Left colon (tissue), 2 donors: ENCODE measurements at regions of chr14 and their contacts with region 1.

Region 1: GRCh38 chr14:65164068-65164824 is 61.9 kb upstream of the MAX start:
- DNase-seq: no peak
- ATAC-seq: peak; percentile 71

Region 2: GRCh38 chr14:64503478-64504309 is 660.6 kb before region 1 on chr14 and contains the start of gene ZBTB25:
- intact Hi-C with region 1: no loop called
- DNase-seq: peak; percentile 89
- ATAC-seq: peak; percentile 74
- total RNA-seq, gene ZBTB25: 5.9 to 6.5 TPM

Region 3: DNA sequence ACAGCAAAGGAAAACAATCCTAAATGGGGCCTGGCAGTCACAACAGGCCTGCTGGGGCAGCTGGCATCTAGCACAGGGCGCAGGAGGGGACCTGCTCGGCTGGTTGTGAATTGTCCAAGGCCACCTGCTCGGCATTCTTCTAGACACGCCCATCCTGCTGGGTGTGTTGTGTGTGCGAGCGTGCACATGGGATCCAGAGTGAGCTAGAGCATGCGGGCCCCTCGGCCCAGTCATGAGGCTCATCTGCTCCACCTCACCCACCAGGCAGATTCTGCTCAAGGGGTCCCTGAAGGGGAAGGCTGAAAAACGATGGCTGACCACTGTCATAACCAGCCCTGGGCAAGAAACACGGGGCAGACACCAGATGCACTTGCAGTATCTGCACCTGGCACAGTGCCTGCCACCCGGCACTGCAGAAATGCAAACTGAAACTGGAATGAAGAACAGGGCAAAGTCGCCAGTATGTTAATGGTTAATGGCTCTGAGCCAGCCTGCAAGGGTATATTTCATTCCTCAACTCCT is 93.7 kb before region 1 on chr14:
- intact Hi-C with region 1: no loop called
- DNase-seq: peak; percentile 87 to 93
- ATAC-seq: peak; percentile 81

Region 4: GRCh38 chr14:65403231-65403630 is 239.0 kb after region 1 on chr14:
- intact Hi-C with region 1: loop called in 1 of 2 experiments (anchors 10 kb)
- DNase-seq: no peak
- ATAC-seq: no peak

Region 5: GRCh38 chr14:65824285-65824977 is 660.2 kb after region 1 on chr14:
- intact Hi-C with region 1: loop called in 1 of 2 experiments (anchors 10 kb)
- DNase-seq: peak in 1 of 2 donors; percentile 44
- ATAC-seq: peak; percentile 93

Region 6: DNA sequence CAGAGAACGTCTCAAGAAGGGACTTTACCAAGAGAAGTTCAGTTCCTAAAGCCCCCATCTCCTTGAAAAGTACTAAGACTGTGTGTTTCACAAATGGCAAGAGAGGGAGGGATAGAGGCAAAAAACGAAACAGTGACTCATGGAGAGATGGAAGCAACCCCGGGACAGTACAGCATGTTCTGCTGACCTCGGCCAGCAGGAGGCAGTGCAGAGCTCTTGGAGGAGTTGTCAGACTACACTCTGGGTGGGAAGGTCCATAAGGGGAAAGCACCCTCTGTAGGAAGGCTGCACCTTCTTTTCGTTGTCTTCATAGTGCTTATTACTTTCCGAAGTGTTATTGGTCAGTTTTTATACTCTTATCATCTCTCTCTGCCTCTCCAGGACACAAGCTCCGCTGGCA is 796.8 kb after region 1 on chr14:
- intact Hi-C with region 1: loop called in 1 of 2 experiments (anchors 5 kb)
- DNase-seq: peak in 1 of 2 donors; percentile 70
- ATAC-seq: peak; percentile 72

Region 7: DNA sequence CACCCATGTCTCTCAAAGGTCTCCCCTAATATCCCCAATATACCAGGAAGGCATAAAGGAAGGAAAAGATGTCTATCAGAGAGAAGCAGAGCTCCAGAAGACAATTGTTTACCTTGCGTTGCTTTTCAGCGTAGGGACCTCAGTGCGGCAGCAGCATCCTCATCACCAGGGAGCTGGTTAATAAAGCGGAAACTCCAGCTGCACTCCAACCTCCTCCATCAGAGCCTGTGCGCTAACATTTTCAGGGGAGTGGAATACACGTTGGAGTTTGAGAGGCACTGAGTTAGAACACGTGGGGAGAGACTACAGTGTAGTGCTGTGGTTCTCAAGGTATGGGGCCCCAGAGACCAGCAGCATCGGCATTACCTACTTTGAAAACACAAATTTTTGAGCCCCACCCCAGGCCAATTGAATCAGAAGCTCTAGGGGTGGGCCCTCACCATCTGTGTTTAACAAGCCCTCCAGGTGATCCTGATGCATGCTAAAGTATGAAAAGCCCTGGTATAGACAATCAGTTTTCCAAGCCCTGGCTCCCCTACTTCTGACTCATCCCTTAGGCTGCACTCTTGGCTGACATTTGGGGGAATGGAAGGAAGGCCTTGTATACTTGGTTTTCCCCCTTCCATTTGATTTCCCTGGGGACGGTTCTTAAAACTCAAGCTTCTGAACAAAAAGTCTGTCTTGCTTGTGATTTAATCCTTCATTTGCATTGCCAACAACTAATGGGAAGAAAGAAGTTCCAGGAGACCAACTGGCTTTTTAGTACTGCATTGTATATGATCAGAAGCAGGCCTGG is 902.9 kb after region 1 on chr14:
- intact Hi-C with region 1: loop called in 1 of 2 experiments (anchors 10 kb)
- DNase-seq: no peak
- ATAC-seq: no peak